Adrenal gland (tissue), 19 donors: ENCODE measurements at regions of chr1 and their contacts with region 1.

Region 1: GRCh38 chr1:92858564-92859399 is 26.9 kb downstream of the RPL5 start:
- DNase-seq: peak; percentile 26 to 78 (median 59)
- H3K4me3 ChIP-seq: peak overlapping the region in 1 of 4 donors; percentile 29
- H3K27ac ChIP-seq: no peak overlapping the region
- H3K4me1 ChIP-seq: peaks cover 0 to 7% of the 10 kb centered on the region in 2 donors
- H3K27me3 ChIP-seq: no peaks in the 10 kb centered on the region
- CTCF ChIP-seq: peak; percentile 81 to 100 (median 97)
- POLR2A ChIP-seq: no peak

Region 2: DNA sequence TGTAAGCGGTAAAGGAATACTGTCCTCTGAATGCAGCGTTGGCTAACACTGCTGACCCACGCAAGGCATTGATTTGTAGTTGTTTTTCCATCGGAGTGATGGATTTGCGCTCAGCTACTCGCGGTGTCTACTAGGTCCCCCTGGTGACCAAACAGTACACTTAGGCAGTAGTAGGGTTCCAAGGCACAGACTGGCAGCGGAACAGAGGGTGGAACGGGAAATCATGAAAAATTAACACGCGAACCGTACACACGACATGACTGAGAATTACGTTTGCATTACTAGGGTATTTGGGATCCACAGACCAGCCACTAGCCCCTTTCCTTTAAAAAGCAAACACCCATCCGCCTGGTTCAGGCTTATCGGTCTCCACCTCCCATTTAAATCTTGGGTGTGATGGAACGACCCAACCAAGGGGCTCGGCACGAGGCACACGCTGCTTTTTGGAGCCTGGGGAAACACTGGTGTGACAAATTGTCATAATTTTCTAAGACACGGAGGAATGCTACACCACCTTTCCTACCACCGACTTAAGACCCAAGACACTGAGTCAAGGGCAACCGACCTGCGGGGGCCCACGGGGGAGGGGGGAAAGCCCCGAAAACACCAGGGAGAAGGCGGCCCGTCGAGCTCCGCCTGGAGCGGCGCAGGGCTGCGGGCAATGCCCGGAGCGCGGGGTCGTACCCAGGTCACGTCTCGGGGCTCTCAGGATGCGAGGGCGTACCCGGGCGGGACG is 101.8 kb after region 1 on chr1:
- intact Hi-C with region 1: loop called in 1 of 2 experiments (anchors 10 kb)
- DNase-seq: peak; percentile 47 to 84 (median 60)
- H3K4me3 ChIP-seq: peak overlapping the region; percentile 41 to 82 (median 60)
- H3K27ac ChIP-seq: peak overlapping the region in 4 of 5 donors; percentile 12 to 91 (median 77)
- H3K4me1 ChIP-seq: peaks cover 3 to 14% of the 10 kb centered on the region in 2 donors
- H3K27me3 ChIP-seq: no peaks in the 10 kb centered on the region
- CTCF ChIP-seq: peak; percentile 20 to 69 (median 52)
- POLR2A ChIP-seq: peak in 1 of 2 donors; percentile 26

Region 3: DNA sequence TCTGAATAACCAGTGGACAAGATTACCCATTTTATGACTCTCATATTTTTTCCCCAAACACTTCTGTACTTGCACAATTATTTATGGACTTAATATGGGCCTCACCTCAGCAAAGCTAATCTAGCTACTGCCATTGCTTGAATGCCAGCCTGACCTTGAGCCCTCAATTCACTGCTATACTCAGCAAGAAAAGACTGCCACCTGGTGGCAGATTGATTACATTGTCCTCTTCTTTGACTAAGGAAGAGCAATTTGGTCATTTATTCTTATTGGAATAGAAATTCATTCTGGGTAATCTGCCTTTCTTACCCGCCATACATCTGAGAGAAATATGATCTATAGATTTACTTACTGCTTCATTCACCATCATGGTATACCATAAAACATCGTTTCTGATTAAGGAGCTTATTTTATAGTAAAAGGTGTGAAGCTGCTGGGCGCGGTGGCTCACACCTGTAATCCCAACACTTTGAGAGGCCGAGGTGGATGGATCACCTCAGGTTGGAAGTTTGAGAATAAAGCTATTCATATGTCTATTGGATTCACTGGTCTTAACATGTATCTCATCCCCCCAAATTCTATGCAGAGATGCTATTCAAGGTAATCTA is 135.4 kb after region 1 on chr1:
- intact Hi-C with region 1: loop called (anchors 5 kb)
- DNase-seq: peak; percentile 77 to 93 (median 85)
- H3K4me3 ChIP-seq: no peak overlapping the region
- H3K27ac ChIP-seq: no peak overlapping the region
- H3K4me1 ChIP-seq: no peaks in the 10 kb centered on the region
- H3K27me3 ChIP-seq: no peaks in the 10 kb centered on the region
- CTCF ChIP-seq: peak; percentile 81 to 95 (median 90)
- POLR2A ChIP-seq: no peak

Region 4: GRCh38 chr1:93021539-93022134 is 162.9 kb after region 1 on chr1:
- intact Hi-C with region 1: no loop called
- DNase-seq: peak in 1 of 7 donors; percentile 11
- H3K4me3 ChIP-seq: no peak overlapping the region
- H3K27ac ChIP-seq: no peak overlapping the region
- H3K4me1 ChIP-seq: no peaks in the 10 kb centered on the region
- H3K27me3 ChIP-seq: no peaks in the 10 kb centered on the region
- CTCF ChIP-seq: peak; percentile 54 to 86 (median 72)
- POLR2A ChIP-seq: no peak